AG04449 (cell line): ENCODE measurements at regions of chr2 and their contacts with region 1.

Region 1: GRCh38 chr2:120312861-120313694 is 32.9 kb upstream of the INHBB start:
- DNase-seq: no peak
- H3K4me3 ChIP-seq: peak overlapping the region; percentile 63
- CTCF ChIP-seq: peak; percentile 94

Region 2: GRCh38 chr2:120109186-120110061 is 203.7 kb before region 1 on chr2:
- CTCF ChIA-PET with region 1: interaction called, 40 read pairs
- POLR2A ChIA-PET with region 1: no interaction called
- DNase-seq: no peak
- H3K4me3 ChIP-seq: no peak overlapping the region
- CTCF ChIP-seq: peak; percentile 24

Region 3: DNA sequence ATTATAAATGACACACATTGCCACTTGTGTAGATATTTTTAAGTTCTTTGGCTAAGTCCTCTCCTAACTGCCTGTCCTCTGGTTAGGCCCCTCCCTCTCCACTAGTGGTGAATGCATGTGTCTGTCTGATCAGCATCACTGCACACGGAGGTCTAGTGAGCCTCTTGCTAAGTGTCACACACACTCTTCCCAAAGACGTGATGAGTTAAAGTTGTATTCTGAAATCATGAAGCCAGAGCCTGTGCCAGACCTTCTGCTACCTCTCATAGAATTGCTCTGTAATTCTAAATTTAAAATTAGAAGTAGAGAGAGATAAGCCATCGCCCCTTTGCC is 19.1 kb before region 1 on chr2:
- CTCF ChIA-PET with region 1: interaction called, 137 read pairs
- POLR2A ChIA-PET with region 1: no interaction called
- DNase-seq: no peak
- H3K4me3 ChIP-seq: no peak overlapping the region
- CTCF ChIP-seq: no peak

Region 4: GRCh38 chr2:120323214-120323613 is 10.1 kb after region 1 on chr2:
- CTCF ChIA-PET with region 1: interaction called, 31 read pairs
- POLR2A ChIA-PET with region 1: no interaction called
- DNase-seq: no peak
- H3K4me3 ChIP-seq: no peak overlapping the region
- CTCF ChIP-seq: no peak

Region 5: GRCh38 chr2:120470041-120470965 is 157.2 kb after region 1 on chr2:
- CTCF ChIA-PET with region 1: no interaction called
- POLR2A ChIA-PET with region 1: no interaction called
- DNase-seq: peak; percentile 83
- H3K4me3 ChIP-seq: no peak overlapping the region
- CTCF ChIP-seq: no peak